ENCODE measurements at regions of chr7 and their contacts with region 1.

Region 1: GRCh38 chr7:75565132-75565837 is 73.2 kb downstream of the SPDYE5 start:
- DNase-seq: peak; percentile 90 to 91
- H3K4me3 ChIP-seq: no peak overlapping the region
- H3K27ac ChIP-seq: peak overlapping the region; percentile 79 to 94 (median 84)
- H3K4me1 ChIP-seq: peaks cover 22 to 40% of the 10 kb centered on the region in 2 donors
- H3K27me3 ChIP-seq: no peaks in the 10 kb centered on the region
- CTCF ChIP-seq: no peak
- POLR2A ChIP-seq: peak in 1 of 2 donors; percentile 24

Region 2: DNA sequence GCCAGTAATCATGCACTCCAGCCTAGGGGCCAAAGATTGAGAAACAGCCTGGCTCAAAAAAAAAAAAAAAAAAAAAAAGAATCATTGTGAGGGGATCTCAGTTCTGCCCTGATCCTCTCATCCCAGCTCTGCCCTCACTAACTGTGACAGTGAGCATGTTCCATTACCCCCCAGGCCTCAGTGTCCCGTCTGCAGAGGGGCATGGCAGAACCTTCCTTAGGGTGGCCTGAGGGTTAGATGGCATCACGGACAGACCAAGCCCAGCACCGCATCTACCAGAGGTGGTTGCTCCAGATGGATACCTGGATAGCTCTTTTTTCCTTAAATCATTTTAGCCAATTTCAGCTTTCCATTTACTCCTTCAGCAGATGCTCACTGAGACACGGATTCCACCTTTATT is 579.8 kb before region 1 on chr7:
- intact Hi-C with region 1: no loop called
- DNase-seq: no peak
- H3K4me3 ChIP-seq: no peak overlapping the region
- H3K27ac ChIP-seq: no peak overlapping the region
- H3K4me1 ChIP-seq: no peaks in the 10 kb centered on the region
- H3K27me3 ChIP-seq: no peaks in the 10 kb centered on the region
- CTCF ChIP-seq: no peak
- POLR2A ChIP-seq: no peak

Region 3: DNA sequence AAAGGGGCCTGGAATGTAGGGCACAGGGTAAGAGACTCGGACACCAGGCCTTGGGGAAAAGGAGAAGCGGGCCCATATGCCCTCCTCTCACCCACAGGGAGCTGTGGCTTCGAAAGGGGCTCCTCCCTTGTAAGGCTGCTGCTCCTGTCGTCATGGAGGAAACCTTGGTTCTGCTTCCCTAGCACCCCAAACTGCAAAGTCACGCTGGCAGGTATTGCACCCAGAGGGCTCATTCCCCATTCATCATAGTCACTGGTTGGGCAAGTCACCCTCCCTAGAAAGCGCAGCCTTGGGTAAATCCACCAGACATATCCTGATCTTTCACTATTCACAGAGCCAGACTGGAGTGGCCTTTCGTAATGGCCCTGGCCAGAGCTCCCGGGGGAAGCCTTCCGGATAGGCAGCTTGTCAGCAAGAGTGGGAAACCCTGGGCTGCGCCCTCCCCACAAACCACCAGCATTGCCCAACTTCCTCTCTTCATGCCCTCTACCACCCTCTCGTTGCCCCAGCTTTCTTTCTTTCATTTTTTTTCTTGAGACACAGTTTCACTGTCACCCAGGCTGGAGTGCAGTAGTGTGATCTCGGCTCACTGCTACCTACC is 52.4 kb after region 1 on chr7:
- intact Hi-C with region 1: loop called (anchors 5 kb)
- DNase-seq: peak; percentile 46 to 54
- H3K4me3 ChIP-seq: no peak overlapping the region
- H3K27ac ChIP-seq: peak overlapping the region in 1 of 3 donors; percentile 27
- H3K4me1 ChIP-seq: peaks cover 3 to 14% of the 10 kb centered on the region in 2 donors
- H3K27me3 ChIP-seq: no peaks in the 10 kb centered on the region
- CTCF ChIP-seq: no peak
- POLR2A ChIP-seq: no peak

Region 4: GRCh38 chr7:75776295-75776971 is 211.1 kb after region 1 on chr7:
- intact Hi-C with region 1: no loop called
- DNase-seq: no peak
- H3K4me3 ChIP-seq: no peak overlapping the region
- H3K27ac ChIP-seq: no peak overlapping the region
- H3K4me1 ChIP-seq: no peaks in the 10 kb centered on the region
- H3K27me3 ChIP-seq: no peaks in the 10 kb centered on the region
- CTCF ChIP-seq: no peak
- POLR2A ChIP-seq: no peak

Measured in thyroid gland (tissue), 4 donors.